BJ (cell line): ENCODE measurements at regions of chr1 and their contacts with region 1.

Region 1: DNA sequence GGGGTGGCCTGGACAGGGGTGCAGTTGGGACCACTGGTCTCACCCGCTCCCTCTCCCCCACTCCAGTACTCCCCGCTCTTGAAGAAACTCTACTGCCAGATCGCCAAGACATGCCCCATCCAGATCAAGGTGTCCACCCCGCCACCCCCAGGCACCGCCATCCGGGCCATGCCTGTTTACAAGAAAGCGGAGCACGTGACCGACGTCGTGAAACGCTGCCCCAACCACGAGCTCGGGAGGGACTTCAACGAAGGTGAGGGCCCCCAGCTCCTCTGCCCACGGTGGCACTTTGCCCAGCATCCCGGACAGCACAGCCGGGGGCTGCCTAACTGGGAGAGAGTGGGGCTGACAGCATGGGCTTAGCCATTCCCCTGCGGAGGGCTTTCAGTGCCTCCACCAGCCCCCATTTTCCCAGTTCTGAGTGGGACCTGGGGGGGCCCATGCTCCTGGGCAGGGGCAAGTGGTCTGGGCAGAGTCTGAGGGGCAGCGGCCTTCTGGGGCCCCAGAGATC is 30.2 kb upstream of the CCDC27 start:
- DNase-seq: no peak
- H3K4me3 ChIP-seq: no peak overlapping the region
- H3K27me3 ChIP-seq: peaks cover 3% of the 10 kb centered on the region
- CTCF ChIP-seq: no peak

Region 2: DNA sequence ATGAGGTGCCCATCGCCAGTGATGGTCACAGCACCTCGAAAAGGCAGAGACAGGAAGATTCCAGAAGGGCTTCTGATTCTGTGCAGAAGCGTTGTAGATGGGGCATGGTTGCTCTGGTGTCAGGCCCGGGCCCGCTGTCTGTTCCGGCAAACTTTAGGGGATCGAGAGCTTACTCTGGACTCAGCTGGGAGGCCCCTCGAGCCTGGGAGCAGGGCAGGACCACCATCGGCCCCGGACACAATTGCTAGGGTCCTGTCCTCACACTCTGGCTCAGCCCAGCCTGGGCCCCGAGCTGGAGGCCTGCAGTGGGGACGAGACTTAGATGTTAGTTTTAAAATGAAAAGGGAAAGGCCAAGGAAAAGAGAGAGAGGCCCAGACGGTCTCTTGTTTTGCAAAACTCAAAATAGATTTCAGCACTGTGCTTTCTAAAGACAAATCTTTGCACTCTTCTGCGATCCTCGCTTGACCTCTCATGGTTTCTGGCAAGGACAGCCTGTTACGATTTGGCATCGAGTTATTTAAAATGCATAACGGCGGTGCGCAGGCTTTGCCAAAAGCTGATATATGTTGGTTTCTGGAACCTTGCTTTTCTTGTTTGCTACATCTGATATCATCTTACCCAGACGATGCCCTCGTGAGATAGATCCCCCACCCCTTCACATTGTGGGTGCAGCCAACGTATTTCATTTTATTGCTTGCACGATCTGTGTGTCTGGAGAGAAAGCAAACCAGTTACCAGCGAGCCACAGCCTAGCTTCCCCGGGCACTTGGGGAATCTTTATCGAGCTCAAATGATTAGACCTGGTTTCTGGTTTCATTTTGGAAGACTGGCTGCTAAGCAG is 595.0 kb before region 1 on chr1:
- CTCF ChIA-PET with region 1: no interaction called
- POLR2A ChIA-PET with region 1: no interaction called
- DNase-seq: no peak
- H3K4me3 ChIP-seq: no peak overlapping the region
- H3K27me3 ChIP-seq: no peaks in the 10 kb centered on the region
- CTCF ChIP-seq: no peak

Region 3: DNA sequence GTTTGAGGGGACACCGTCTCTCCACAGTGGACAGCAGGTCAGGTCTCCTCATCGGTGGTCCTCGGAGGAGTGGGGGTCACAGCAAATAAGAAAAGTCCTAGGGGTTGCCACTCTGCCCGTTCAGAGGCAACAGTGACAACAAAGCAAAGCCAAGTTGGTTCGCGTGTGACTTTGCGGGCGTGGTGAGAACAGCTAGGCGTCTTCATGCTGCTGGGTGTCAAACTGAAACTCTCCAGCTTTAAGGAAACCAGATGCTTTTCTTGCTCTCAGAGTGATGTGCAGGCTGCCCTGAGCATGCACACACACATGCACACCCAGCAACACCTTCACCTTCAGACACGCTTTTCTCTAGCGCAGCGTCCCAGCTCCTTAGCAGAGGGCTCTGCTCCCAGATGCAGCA is 337.6 kb before region 1 on chr1:
- CTCF ChIA-PET with region 1: no interaction called
- POLR2A ChIA-PET with region 1: no interaction called
- DNase-seq: no peak
- H3K4me3 ChIP-seq: no peak overlapping the region
- H3K27me3 ChIP-seq: peaks cover 5% of the 10 kb centered on the region; the same call in 1 of the 2 replicates
- CTCF ChIP-seq: no peak

Region 4: DNA sequence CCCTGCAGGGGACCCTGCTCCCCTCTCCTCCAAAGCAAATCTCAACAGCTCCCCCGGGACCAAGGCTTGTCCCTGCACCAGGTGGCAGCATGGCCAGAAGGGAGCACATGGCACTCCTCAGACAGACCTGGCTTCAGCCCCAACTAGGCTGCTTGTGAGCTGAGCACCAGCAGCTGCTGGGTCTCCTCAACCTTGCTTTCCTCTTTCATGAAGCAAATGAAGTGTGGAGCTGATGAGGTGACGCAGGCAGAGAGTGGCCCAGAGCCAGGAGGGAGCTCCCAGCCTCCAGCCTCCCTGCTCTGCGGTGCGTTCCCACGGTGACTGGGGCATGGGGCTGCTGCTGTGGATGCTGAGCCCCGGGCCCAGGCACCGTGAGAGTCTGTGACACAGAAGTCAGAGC is 144.7 kb before region 1 on chr1:
- CTCF ChIA-PET with region 1: no interaction called
- POLR2A ChIA-PET with region 1: no interaction called
- DNase-seq: no peak
- H3K4me3 ChIP-seq: no peak overlapping the region
- H3K27me3 ChIP-seq: no peaks in the 10 kb centered on the region; the same call in none of the 2 replicates
- CTCF ChIP-seq: no peak

Region 5: DNA sequence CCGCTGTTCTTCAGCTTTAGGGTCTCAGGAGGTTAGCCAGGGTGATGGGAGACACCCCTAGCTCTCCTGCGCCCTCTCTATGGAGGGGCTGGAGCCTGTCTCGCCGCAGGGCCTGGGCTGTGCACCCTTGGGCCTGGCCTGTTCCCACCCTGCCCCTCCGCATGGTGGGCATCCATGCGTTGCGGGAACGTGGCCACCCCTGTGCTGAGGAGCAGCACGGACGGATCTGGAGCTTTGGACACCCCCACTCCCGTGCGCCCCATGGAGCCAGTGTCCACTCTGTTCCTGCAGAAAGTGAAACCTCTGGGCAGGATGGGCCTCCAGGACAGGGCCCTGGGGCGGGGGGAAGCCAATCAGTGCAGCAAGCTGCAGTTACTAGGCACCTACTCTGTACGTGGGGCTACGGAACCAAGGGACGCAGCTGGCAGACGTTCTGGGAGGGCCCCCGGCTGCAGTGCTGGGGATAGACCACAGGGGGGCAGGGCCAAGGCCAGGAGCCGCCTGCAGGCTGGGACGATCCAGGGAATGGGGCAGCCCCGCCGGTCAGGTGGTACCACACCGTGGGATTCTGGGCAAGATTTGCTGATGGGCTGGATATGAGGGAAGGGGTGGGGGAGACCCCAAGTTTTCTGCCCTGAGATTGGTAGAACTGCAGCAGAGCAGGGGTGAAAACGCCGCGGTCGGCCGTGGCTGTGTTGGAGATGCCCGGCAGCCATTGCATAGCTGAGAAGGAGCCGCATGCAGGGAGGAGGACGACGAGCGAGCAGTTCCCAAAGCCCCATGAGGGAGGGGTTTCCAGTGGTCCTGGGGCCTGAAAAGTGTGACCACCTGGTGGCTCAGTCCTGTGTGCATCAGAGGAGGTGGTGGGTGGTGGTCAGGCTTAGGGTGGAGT is 26.4 kb before region 1 on chr1:
- CTCF ChIA-PET with region 1: interaction called, 13 read pairs
- POLR2A ChIA-PET with region 1: no interaction called
- DNase-seq: no peak
- H3K4me3 ChIP-seq: no peak overlapping the region
- H3K27me3 ChIP-seq: peaks cover 19% of the 10 kb centered on the region
- CTCF ChIP-seq: peak; percentile 91

Region 6: GRCh38 chr1:3732434-3733093 is 10.6 kb after region 1 on chr1:
- CTCF ChIA-PET with region 1: interaction called, 30 read pairs
- POLR2A ChIA-PET with region 1: no interaction called
- DNase-seq: no peak
- H3K4me3 ChIP-seq: no peak overlapping the region
- H3K27me3 ChIP-seq: no peaks in the 10 kb centered on the region; the same call in 1 of the 2 replicates
- CTCF ChIP-seq: peak; percentile 14; the same call in 1 of the 2 replicates